ENCODE measurements at regions of chr12 and their contacts with region 1.

Region 1: GRCh38 chr12:22059976-22060647 is 14.1 kb downstream of the CMAS start:
- DNase-seq: no peak
- ATAC-seq: no peak
- H3K4me3 ChIP-seq: no peak overlapping the region
- H3K27ac ChIP-seq: no peak overlapping the region
- H3K4me1 ChIP-seq: no peaks in the 10 kb centered on the region
- H3K27me3 ChIP-seq: no peaks in the 10 kb centered on the region
- CTCF ChIP-seq: no peak
- EP300 ChIP-seq: no peak
- POLR2A ChIP-seq: no peak
- RAD21 ChIP-seq: no peak

Region 2: GRCh38 chr12:22046090-22046967 is 13.8 kb before region 1 on chr12 and contains the start of gene CMAS:
- CTCF ChIA-PET with region 1: interaction called, 7 read pairs
- POLR2A ChIA-PET with region 1: interaction called, 3 read pairs
- RAD21 ChIA-PET with region 1: interaction called, 3 read pairs
- SMC1A ChIA-PET with region 1: interaction called, 19 read pairs
- in situ Hi-C with region 1: no loop called
- intact Hi-C with region 1: no loop called
- DNase-seq: peak; percentile 16
- ATAC-seq: peak; percentile 95
- H3K4me3 ChIP-seq: peak within 1 kb of the TSS; percentile 99
- H3K27ac ChIP-seq: peak within 1 kb of the TSS; percentile 78
- H3K4me1 ChIP-seq: no peaks in the 10 kb centered on the region
- H3K27me3 ChIP-seq: no peaks in the 10 kb centered on the region
- CTCF ChIP-seq: no peak
- EP300 ChIP-seq: no peak
- POLR2A ChIP-seq: peak; percentile 84
- RAD21 ChIP-seq: no peak
- polyA plus RNA-seq, gene CMAS: 12.9 to 25.7 TPM

Region 3: DNA sequence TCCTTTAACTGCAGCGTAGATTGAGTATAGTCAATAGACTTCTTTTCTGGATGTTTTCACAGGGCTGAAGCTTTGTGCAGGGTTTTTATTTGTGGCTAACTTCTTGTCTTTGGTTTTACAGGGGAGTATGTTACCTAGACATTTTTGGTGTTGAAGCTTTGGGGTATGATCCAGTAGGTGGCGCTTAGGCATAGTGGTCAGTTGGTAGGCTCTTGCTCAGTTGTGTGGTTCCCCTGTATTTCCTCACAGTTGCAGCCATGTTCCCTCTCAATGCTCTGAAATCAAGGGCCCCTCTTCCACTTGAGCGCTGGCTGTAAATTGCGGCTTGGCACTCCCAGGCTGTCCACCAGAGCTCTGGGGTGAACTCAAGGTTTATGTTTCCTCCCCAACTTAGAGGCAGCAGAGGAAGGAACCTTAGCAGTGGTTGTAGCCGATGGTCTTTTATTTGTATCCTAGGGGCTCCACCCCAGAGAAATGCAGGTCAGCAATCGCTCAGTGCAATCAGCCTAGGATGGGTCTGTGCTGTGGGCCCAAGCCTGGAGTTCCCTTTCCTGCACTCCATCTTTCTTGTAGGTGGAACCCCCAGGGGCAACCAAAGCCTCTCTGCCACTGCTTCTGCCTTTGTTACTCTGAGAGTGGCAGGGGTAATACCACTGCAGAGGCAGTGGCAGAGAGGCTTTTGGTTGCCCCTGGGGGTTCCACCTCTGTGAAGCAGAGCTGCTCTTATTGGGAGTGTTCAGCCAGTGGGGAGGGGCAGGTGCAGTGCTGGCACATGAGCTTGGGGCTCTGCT is 41.0 kb after region 1 on chr12:
- CTCF ChIA-PET with region 1: no interaction called
- POLR2A ChIA-PET with region 1: no interaction called
- RAD21 ChIA-PET with region 1: no interaction called
- SMC1A ChIA-PET with region 1: no interaction called
- in situ Hi-C with region 1: no loop called
- intact Hi-C with region 1: no loop called
- DNase-seq: peak; percentile 13
- ATAC-seq: peak; percentile 86
- H3K4me3 ChIP-seq: no peak overlapping the region
- H3K27ac ChIP-seq: no peak overlapping the region
- H3K4me1 ChIP-seq: peaks cover 2% of the 10 kb centered on the region; the same call in 1 of the 2 replicates
- H3K27me3 ChIP-seq: no peaks in the 10 kb centered on the region
- CTCF ChIP-seq: peak; percentile 49 to 58 (median 56); a peak in 5 of 6 replicates
- EP300 ChIP-seq: no peak
- POLR2A ChIP-seq: no peak
- RAD21 ChIP-seq: peak; percentile 63